ENCODE measurements at regions of chr4 and their contacts with region 1.

Region 1: DNA sequence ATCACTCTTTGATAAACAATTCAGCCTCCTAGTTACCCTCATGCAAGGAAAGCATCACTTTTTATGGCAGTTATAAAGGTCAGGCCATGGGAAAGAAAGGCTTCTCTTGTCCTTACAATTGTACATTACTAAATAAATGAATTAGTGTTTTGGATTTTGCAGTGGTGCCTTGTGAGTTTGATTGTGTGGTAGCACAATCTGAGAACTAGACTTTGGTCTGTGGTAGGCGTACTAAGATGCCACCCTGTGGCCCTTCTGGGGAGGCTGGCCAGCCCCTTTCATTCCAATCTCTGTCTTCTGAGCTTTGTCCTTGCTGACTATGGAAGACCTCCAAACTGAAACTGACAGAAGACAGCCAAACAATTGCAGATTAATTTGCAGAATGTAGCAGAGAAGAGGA is 14.6 kb upstream of the HNRNPD start:
- DNase-seq: no peak
- ATAC-seq: no peak
- H3K4me3 ChIP-seq: no peak overlapping the region
- H3K27ac ChIP-seq: no peak overlapping the region
- H3K4me1 ChIP-seq: no peaks in the 10 kb centered on the region
- H3K27me3 ChIP-seq: no peaks in the 10 kb centered on the region
- CTCF ChIP-seq: no peak

Region 2: DNA sequence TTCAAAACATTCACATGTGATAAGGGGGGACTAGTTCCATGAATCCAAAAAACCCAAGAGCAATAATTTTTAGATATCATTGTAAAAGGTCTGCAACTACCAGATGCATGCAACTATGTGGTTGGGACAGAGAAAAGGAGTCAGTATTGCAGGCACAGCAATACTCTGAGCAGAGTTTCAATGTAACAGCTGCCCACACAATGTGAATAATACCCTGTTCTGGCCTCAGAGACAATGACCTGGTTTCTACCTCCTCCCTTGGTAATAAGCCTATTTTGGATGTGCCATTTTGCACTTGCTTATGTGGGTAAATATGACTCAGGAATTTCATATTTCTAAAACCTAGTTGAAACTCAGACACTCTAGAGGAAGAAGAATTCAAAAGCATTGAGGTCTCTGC is 721.9 kb before region 1 on chr4:
- intact Hi-C with region 1: no loop called
- DNase-seq: no peak
- ATAC-seq: no peak
- H3K4me3 ChIP-seq: no peak overlapping the region
- H3K27ac ChIP-seq: no peak overlapping the region
- H3K4me1 ChIP-seq: no peaks in the 10 kb centered on the region
- H3K27me3 ChIP-seq: no peaks in the 10 kb centered on the region
- CTCF ChIP-seq: no peak

Region 3: GRCh38 chr4:82677321-82677720 is 288.9 kb after region 1 on chr4:
- intact Hi-C with region 1: loop called in 1 of 2 experiments (anchors 5 kb)
- DNase-seq: no peak
- ATAC-seq: no peak
- H3K4me3 ChIP-seq: no peak overlapping the region
- H3K27ac ChIP-seq: no peak overlapping the region
- H3K4me1 ChIP-seq: no peaks in the 10 kb centered on the region
- H3K27me3 ChIP-seq: no peaks in the 10 kb centered on the region
- CTCF ChIP-seq: no peak